Dendritic cell treated with granulocyte-macrophage colony-stimulating factor and Interleukin-4, amounts not matched to agents 40 ng/mL and 50 ng/mL, for 4 days (primary cell): ENCODE measurements at regions of chr4 and their contacts with region 1.

Region 1: GRCh38 chr4:183348706-183349659 is 26.8 kb upstream of the CLDN24 start:
- H3K4me3 Mint-ChIP-seq: no peak overlapping the region
- H3K27ac Mint-ChIP-seq: peak overlapping the region; percentile 84
- H3K4me1 Mint-ChIP-seq: peaks cover 31% of the 10 kb centered on the region
- H3K27me3 Mint-ChIP-seq: peaks cover 10% of the 10 kb centered on the region

Region 2: GRCh38 chr4:182343453-182343852 is 1005.5 kb before region 1 on chr4:
- intact Hi-C with region 1: no loop called
- H3K4me3 Mint-ChIP-seq: no peak overlapping the region
- H3K27ac Mint-ChIP-seq: no peak overlapping the region
- H3K4me1 Mint-ChIP-seq: no peaks in the 10 kb centered on the region
- H3K27me3 Mint-ChIP-seq: no peaks in the 10 kb centered on the region

Region 3: GRCh38 chr4:182917182-182918043 is 431.6 kb before region 1 on chr4 and contains the start of gene DCTD:
- intact Hi-C with region 1: loop called (anchors 5 kb)
- H3K4me3 Mint-ChIP-seq: peak within 1 kb of the TSS; percentile 83
- H3K27ac Mint-ChIP-seq: peak within 1 kb of the TSS; percentile 94
- H3K4me1 Mint-ChIP-seq: peaks cover 41% of the 10 kb centered on the region
- H3K27me3 Mint-ChIP-seq: peaks cover 5% of the 10 kb centered on the region

Region 4: GRCh38 chr4:183398227-183399125 is 49.5 kb after region 1 on chr4:
- intact Hi-C with region 1: loop called (anchors 1 kb)
- H3K4me3 Mint-ChIP-seq: peak overlapping the region; percentile 82
- H3K27ac Mint-ChIP-seq: peak overlapping the region; percentile 97
- H3K4me1 Mint-ChIP-seq: peaks cover 42% of the 10 kb centered on the region
- H3K27me3 Mint-ChIP-seq: peaks cover 10% of the 10 kb centered on the region